IMR-90 (cell line): ENCODE measurements at regions of chr1 and their contacts with region 1.

Region 1: DNA sequence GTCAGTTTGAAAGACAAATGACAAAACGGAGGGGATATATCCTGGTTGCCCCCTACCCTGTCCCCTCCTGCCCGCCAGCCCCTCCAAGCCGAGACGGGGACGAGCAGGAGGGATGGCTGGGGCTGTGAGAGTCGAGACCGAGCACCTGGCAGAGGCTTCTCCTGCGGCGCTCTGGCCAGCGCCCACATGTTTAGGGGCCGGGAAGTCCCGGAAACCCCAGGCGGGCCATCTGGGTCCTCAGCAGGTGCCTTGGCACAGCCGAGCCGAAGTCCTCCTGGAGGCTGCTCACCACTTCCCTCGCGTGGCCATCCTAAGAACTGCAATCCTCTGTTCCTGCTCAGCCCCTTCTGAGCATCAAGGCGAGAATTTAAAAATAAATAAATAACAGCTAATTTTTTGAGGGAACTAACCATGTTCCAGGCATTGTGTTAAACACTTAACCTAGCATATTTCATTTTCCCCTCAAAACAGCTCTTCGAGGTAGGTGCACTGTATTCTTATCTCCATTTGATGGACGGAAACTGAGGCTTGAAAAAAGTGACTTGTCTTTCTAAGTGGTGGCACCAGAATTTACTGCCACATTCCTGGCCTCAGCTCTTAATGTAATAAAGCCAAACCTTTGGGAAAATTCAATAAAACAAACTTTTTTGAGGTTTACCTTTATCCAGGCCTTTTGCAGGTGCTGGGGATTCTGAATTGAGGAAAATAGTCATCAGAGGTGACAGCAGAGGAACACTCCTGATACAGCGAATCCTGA is 3.5 kb upstream of the RIMS3 start:
- DNase-seq: peak; percentile 57
- ATAC-seq: peak; percentile 67; the same call in 1 of the 2 replicates
- H3K4me3 ChIP-seq: no peak overlapping the region
- H3K27ac ChIP-seq: no peak overlapping the region
- H3K4me1 ChIP-seq: 0 out of 2 replicates have a peak, but pooled peaks cover 2% of the 10 kb centered on the region
- H3K27me3 ChIP-seq: peaks cover 18% of the 10 kb centered on the region
- CTCF ChIP-seq: peak; percentile 79
- POLR2A ChIP-seq: no peak
- RAD21 ChIP-seq: peak; percentile 70

Region 2: DNA sequence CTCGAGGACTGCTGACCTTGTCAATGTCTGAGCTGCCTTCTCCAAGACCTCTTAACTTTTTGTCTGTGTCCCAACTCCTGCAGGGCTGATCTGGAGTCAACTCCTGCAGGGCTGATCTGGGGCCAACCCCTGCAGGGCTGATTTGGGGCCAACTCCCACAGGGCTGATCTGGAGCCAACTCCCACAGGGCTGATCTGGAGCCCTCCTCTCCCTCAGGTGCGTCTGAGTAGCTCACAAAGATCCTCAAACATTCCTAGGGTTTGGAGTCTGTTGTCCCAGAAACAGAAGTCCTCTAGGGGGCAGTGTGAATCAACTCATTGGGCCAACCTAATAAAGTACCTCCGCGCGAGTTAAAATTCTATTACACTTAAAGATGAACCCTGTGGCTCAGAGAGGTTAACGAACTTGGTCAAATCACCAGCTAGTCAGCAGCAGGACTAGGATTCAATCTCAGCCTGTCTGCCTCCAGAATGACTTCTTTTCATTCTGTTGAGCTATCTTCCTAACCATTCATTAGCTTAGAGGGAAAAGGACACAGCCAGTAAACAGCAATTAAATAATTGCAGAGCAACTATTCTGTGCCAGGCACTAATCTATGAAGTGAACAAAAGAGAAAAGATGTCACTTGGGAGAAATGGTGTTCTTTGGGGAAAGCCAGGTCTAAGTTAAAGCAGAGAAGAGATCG is 524.9 kb before region 1 on chr1:
- CTCF ChIA-PET with region 1: no interaction called
- POLR2A ChIA-PET with region 1: no interaction called
- dilution Hi-C with region 1: no loop called
- in situ Hi-C with region 1: no loop called
- intact Hi-C with region 1: loop called (anchors 5 kb)
- DNase-seq: peak; percentile 66
- ATAC-seq: peak; percentile 85
- H3K4me3 ChIP-seq: no peak overlapping the region
- H3K27ac ChIP-seq: no peak overlapping the region
- H3K4me1 ChIP-seq: no peaks in the 10 kb centered on the region
- H3K27me3 ChIP-seq: peaks cover 30% of the 10 kb centered on the region
- CTCF ChIP-seq: peak; percentile 82
- POLR2A ChIP-seq: no peak
- RAD21 ChIP-seq: peak; percentile 82

Region 3: DNA sequence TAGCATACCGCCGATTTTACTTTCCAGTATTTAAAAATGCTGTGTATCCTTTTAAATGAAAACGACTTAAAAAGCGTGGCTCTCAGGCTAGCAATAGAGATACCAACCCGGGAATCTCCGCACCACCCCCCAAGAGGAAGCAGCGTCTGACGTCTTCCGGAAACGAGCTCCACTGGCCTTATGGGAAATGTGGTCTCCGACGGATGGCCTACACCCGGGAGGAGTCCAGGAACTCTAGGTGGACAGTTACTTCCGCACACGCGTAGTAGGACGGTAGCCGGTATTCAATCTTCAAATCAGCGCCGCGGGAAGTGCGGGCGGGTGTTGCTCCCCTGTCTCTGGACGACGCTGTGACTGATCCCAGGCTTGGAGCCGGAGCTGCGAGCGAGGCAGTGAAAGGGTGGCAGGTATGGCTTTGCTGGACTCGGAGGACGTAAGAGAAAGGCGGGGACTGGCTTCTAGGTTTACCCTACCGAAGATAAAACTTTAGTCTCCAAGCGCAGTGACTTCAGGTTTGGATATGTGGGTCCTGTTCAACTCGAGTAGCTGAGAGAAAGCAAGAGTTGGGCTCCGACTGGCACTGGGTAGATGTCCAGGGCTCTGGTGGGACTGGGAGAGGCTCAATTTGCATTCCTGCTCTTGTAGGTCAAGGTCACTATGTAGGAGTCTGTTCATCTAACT is 137.4 kb before region 1 on chr1 and contains the start of gene ZNF684:
- CTCF ChIA-PET with region 1: no interaction called
- POLR2A ChIA-PET with region 1: no interaction called
- dilution Hi-C with region 1: no loop called
- in situ Hi-C with region 1: no loop called
- intact Hi-C with region 1: loop called (anchors 10 kb)
- DNase-seq: peak; percentile 95
- ATAC-seq: peak; percentile 99
- H3K4me3 ChIP-seq: peak within 1 kb of the TSS; percentile 73
- H3K27ac ChIP-seq: peak within 1 kb of the TSS; percentile 54
- H3K4me1 ChIP-seq: no peaks in the 10 kb centered on the region
- H3K27me3 ChIP-seq: no peaks in the 10 kb centered on the region
- CTCF ChIP-seq: no peak
- POLR2A ChIP-seq: peak; percentile 58; the same call in 1 of the 2 replicates
- RAD21 ChIP-seq: no peak
- total RNA-seq, gene ZNF684: 4.1 and 5.0 TPM in 2 replicates

Region 4: GRCh38 chr1:40612345-40612831 is 56.6 kb before region 1 on chr1:
- CTCF ChIA-PET with region 1: no interaction called
- POLR2A ChIA-PET with region 1: no interaction called
- dilution Hi-C with region 1: no loop called
- in situ Hi-C with region 1: no loop called
- intact Hi-C with region 1: loop called (anchors 1 kb)
- DNase-seq: peak; percentile 52
- ATAC-seq: peak; percentile 97
- H3K4me3 ChIP-seq: no peak overlapping the region
- H3K27ac ChIP-seq: no peak overlapping the region
- H3K4me1 ChIP-seq: no peaks in the 10 kb centered on the region
- H3K27me3 ChIP-seq: peaks cover 4% of the 10 kb centered on the region; the same call in 1 of the 2 replicates
- CTCF ChIP-seq: peak; percentile 84
- POLR2A ChIP-seq: no peak
- RAD21 ChIP-seq: peak; percentile 87

Region 5: GRCh38 chr1:40630488-40631381 is 38.2 kb before region 1 on chr1:
- CTCF ChIA-PET with region 1: no interaction called
- POLR2A ChIA-PET with region 1: no interaction called
- dilution Hi-C with region 1: no loop called
- in situ Hi-C with region 1: no loop called
- intact Hi-C with region 1: loop called (anchors 2 kb)
- DNase-seq: peak; percentile 19
- ATAC-seq: peak; percentile 75
- H3K4me3 ChIP-seq: no peak overlapping the region
- H3K27ac ChIP-seq: no peak overlapping the region
- H3K4me1 ChIP-seq: no peaks in the 10 kb centered on the region
- H3K27me3 ChIP-seq: peaks cover 10% of the 10 kb centered on the region; the same call in 1 of the 2 replicates
- CTCF ChIP-seq: peak; percentile 47
- POLR2A ChIP-seq: no peak
- RAD21 ChIP-seq: peak; percentile 48